Panc1 (cell line): ENCODE measurements at regions of chr17 and their contacts with region 1.

Region 1: DNA sequence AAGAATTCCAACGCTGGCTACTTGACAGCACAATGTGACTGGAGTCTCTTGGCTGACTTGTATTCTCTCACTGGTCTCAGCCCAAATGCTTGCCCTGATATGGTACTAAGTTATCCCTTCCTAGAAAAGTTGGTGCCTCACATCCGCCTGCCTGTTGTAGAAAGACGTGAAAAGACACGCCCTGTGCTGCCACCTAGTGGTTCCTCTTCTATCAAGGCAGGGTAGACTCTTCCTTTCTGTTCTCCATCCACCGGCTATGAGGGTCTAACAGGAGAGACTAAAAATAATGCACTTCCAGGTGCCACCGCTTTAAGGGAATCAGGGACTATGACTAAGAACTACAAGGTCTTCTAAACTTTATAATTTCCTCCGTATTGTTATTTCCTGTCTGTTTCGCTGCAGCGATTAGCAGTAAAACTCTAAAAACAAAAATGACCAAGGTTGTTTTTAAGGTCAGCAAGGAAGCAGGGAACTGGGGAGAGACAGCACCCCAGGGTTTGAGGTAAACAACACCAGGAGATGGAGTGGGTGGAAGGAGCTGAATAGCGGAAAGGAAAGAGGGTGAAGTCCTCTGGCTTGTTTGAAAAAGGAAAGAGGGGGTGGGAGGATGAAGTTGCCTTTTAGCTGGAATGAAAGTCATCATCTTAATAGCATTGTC is 109.5 kb downstream of the YPEL2 start:
- DNase-seq: peak; percentile 58
- ATAC-seq: peak; percentile 99
- H3K4me3 ChIP-seq: no peak overlapping the region
- H3K27ac ChIP-seq: no peak overlapping the region
- H3K4me1 ChIP-seq: no peaks in the 10 kb centered on the region
- H3K27me3 ChIP-seq: no peaks in the 10 kb centered on the region
- CTCF ChIP-seq: peak; percentile 78

Region 2: DNA sequence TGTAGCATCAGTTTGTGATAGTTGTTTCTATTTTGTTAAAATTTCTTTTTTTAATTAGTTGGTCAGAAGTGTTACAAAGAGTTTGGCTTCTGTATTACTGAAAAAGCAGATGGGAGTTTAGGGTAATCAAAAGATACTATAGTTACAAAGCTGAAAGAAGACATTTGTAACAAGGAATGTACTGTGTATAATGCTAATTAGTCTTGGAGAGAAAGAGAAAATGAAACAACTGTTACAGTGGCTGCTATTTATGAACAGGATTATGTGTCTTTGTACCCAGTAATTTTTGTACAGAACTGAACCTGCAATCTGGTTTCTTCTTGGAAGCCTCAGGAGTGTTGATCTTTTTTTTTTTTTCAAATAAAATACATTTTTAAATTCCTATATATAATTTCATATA is 206.3 kb before region 1 on chr17:
- CTCF ChIA-PET with region 1: no interaction called
- POLR2A ChIA-PET with region 1: no interaction called
- in situ Hi-C with region 1: loop called (anchors 25 kb)
- intact Hi-C with region 1: no loop called
- DNase-seq: no peak
- ATAC-seq: no peak
- H3K4me3 ChIP-seq: no peak overlapping the region
- H3K27ac ChIP-seq: no peak overlapping the region
- H3K4me1 ChIP-seq: no peaks in the 10 kb centered on the region
- H3K27me3 ChIP-seq: no peaks in the 10 kb centered on the region
- CTCF ChIP-seq: no peak

Region 3: DNA sequence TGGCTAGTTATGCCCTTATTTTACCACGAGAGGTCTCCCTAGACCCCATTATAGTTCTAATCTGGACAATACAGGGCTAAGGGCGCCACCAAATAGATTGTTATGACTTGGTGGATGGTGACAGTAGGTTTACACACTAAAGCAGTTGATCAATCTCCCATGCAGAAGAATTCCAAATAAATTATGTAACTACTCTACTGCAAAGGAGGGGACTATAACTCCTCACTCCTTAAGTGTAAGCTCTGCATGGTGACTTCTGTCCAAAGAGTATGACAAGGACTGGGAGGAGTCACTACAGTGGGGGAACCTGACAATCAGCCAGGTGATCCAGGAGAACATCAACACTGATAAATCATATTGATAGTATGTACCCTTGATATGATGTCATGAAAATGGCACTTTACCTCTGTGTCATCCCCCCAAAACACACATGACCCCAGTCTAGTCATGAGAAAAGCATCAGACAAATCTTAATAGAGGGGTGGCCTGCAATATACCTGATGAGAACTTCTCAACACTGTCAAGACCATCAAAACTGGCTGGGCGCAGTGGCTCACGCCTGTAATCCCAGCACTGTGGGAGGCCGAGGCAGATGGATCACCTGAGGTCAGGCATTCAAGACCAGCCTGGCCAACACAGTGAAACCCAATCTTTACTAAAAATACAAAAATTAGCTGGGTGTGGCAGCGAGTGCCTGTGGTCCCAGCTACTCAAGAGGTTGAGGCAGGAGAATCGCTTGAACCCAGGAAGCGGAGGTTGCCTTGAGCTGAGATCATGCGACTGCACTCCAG is 129.6 kb before region 1 on chr17:
- CTCF ChIA-PET with region 1: interaction called, 6 read pairs
- POLR2A ChIA-PET with region 1: no interaction called
- in situ Hi-C with region 1: no loop called
- intact Hi-C with region 1: loop called (anchors 2 kb)
- DNase-seq: peak; percentile 41
- ATAC-seq: peak; percentile 97
- H3K4me3 ChIP-seq: no peak overlapping the region
- H3K27ac ChIP-seq: no peak overlapping the region
- H3K4me1 ChIP-seq: no peaks in the 10 kb centered on the region
- H3K27me3 ChIP-seq: no peaks in the 10 kb centered on the region
- CTCF ChIP-seq: peak; percentile 78

Region 4: DNA sequence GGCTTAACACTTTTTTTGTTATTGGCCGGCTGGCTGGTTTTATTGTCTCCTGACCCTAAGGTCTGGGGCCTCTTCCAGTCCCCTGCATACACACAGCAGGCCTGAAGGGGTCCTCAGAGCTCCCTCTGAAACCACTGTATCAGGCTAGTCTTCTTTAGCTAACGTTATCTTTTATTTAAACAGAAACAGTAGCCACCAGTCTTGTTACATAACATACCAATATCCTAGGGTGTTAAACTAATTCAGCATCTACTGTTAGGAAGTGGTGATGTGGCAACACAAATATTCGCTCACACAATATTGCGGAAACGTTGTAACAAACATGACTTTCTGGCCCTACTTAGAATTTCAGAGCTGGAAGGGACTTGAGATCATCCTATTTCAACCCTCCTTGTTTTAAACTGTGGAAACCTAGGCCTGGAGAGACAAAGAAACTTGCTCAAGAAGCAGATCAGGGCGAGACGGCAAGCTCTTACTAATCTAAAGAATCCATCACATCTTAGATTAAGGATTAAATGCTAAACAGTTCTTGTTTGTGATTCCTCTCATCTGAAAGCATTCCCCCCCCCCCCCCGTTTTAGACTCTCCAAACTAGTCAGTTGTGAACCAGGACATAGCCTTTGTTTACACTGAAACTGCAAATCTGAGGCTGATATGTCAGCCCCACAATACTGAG is 111.1 kb before region 1 on chr17:
- CTCF ChIA-PET with region 1: interaction called, 6 read pairs
- POLR2A ChIA-PET with region 1: no interaction called
- in situ Hi-C with region 1: no loop called
- intact Hi-C with region 1: loop called (anchors 5 kb)
- DNase-seq: no peak
- ATAC-seq: peak; percentile 68; the same call in 1 of the 2 replicates
- H3K4me3 ChIP-seq: no peak overlapping the region
- H3K27ac ChIP-seq: no peak overlapping the region
- H3K4me1 ChIP-seq: peaks cover 9% of the 10 kb centered on the region
- H3K27me3 ChIP-seq: peaks cover 4% of the 10 kb centered on the region; the same call in 1 of the 2 replicates
- CTCF ChIP-seq: peak; percentile 77